Activated T-helper 2 cell treated with anti-CD3 and anti-CD28 coated beads, Interferon-gamma antibody, Interleukin-2, Interleukin-4, amounts not matched to agents 10 μg/mL and 5 μg/mL and 100 μg/mL, durations not matched to agents 14 hours and 24 hours and 36 hours (primary cell): ENCODE measurements at regions of chr7 and their contacts with region 1.

Region 1: GRCh38 chr7:38478404-38478803 is 152.8 kb downstream of the AMPH start:
- DNase-seq: no peak
- H3K4me3 Mint-ChIP-seq: no peak overlapping the region
- H3K27ac Mint-ChIP-seq: no peak overlapping the region
- H3K4me1 Mint-ChIP-seq: no peaks in the 10 kb centered on the region
- H3K27me3 Mint-ChIP-seq: peaks cover 15% of the 10 kb centered on the region

Region 2: DNA sequence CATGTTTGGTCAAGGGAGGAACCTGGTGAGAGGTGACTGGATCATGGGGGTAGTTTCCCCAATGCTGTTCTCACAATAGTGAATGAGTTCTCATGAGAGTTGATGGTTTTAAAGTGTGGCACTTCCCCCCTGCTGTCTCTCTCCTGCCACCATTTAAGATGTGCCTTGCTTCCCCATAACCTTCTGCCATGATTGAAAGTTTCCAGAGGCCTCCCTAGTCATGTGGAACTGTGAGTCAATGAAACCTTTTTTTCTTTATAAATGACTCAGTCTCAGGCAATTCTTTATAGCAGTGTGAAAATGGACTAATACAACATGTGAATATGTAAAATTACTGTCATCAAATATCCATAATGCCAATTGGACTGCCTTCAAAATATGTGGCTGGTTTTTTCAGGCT is 39.4 kb before region 1 on chr7:
- intact Hi-C with region 1: loop called (anchors 5 kb)
- DNase-seq: no peak
- H3K4me3 Mint-ChIP-seq: no peak overlapping the region
- H3K27ac Mint-ChIP-seq: peak overlapping the region; percentile 20
- H3K4me1 Mint-ChIP-seq: peaks cover 9% of the 10 kb centered on the region
- H3K27me3 Mint-ChIP-seq: peaks cover 3% of the 10 kb centered on the region